ENCODE measurements at regions of chr16 and their contacts with region 1.

Region 1: DNA sequence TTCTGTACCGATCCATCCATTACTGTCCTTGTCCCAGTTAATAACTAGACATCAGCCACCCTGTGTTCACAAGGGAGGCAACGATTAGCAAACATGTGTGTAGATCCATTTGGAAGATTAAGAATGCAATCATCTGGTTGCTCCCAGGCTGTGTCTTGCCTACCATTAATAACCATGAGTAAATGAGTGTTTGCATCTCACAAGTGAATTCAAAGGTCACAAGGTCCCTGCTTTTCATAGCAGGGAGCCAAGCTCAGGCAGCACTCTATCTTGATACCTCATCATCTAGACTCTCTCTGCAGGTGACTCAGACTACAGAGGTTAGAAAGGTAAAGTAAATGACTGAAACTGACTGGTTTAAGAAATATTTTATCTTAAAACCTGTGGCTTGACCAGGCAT is 25.3 kb downstream of the VWA3A start:
- DNase-seq: no peak
- H3K4me3 Mint-ChIP-seq: no peak overlapping the region
- H3K27ac Mint-ChIP-seq: no peak overlapping the region
- H3K4me1 Mint-ChIP-seq: no peaks in the 10 kb centered on the region
- H3K27me3 Mint-ChIP-seq: peaks cover 30% of the 10 kb centered on the region
- CTCF ChIP-seq: no peak

Region 2: DNA sequence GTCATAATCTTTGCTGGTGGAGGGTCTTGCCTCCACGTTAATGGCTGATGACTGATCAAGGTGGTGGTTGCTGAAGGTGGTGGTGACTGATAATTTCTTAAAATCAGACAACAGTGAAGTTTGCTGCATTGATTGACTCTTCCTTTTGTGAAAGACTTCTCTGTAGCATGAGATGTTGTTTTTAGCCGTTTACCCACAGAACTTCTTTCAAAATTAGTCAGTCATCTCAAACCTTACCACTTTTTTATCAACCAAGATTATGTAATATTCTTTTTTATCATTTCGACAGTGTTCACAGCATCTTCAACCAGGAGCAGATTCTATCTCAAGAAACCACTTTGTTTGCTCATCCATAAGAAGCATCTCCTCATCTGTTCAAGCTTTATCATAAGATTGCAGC is 158.6 kb before region 1 on chr16:
- CTCF ChIA-PET with region 1: no interaction called
- intact Hi-C with region 1: no loop called
- DNase-seq: no peak
- H3K4me3 Mint-ChIP-seq: no peak overlapping the region
- H3K27ac Mint-ChIP-seq: no peak overlapping the region
- H3K4me1 Mint-ChIP-seq: peaks cover 9% of the 10 kb centered on the region
- H3K27me3 Mint-ChIP-seq: no peaks in the 10 kb centered on the region
- CTCF ChIP-seq: no peak

Region 3: GRCh38 chr16:22070361-22071330 is 47.0 kb before region 1 on chr16:
- CTCF ChIA-PET with region 1: interaction called, 10 read pairs
- intact Hi-C with region 1: no loop called
- DNase-seq: no peak
- H3K4me3 Mint-ChIP-seq: no peak overlapping the region
- H3K27ac Mint-ChIP-seq: no peak overlapping the region
- H3K4me1 Mint-ChIP-seq: no peaks in the 10 kb centered on the region
- H3K27me3 Mint-ChIP-seq: no peaks in the 10 kb centered on the region
- CTCF ChIP-seq: no peak

Measured in Calu3 (cell line).